IMR-90 (cell line): ENCODE measurements at regions of chr1 and their contacts with region 1.

Region 1: DNA sequence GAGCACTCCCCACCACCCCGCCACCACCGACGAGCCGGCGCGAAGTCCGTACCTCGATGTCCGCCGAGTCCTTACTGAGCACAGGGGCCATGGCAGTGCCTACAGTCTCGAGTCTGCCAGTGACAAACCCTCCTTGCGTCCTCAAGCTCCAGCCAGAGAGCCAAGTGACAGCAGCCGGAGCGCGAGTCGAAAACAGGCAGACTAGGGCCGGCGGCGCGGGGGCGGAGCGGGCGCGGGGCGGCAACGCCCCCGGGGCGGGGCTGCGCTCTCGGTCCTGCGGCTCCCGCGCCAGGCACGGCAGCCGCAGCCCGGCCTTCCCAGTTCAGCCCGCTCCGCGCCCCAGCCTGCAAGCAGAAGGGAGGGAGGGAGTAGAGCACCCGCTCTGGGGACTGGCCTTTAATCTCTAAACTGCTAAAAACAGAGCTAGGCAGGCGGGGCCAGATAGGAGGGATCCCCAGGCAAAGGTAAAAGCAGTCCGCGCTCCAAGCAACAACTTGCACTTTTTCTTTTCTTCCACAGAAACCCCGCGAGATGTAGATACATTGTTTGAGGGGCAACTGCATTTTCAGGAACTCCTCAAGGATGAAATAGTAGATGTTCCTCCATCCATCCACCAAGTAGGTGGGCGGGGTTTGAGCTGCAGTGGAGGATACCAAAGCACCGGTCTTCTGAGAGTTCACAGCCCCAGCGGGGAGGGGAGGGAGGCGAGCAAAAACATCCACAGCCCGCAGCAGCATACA is at the start of gene DPYD:
- DNase-seq: peak; percentile 85
- ATAC-seq: peak; percentile 98
- H3K4me3 ChIP-seq: peak within 1 kb of the TSS; percentile 92
- H3K27ac ChIP-seq: peak within 1 kb of the TSS; percentile 81
- H3K4me1 ChIP-seq: 0 out of 2 replicates have a peak, but pooled peaks cover 2% of the 10 kb centered on the region
- H3K27me3 ChIP-seq: no peaks in the 10 kb centered on the region
- CTCF ChIP-seq: no peak
- POLR2A ChIP-seq: peak; percentile 70; the same call in 1 of the 2 replicates
- RAD21 ChIP-seq: no peak
- total RNA-seq, gene DPYD: 47.3 and 58.3 TPM in 2 replicates

Region 2: DNA sequence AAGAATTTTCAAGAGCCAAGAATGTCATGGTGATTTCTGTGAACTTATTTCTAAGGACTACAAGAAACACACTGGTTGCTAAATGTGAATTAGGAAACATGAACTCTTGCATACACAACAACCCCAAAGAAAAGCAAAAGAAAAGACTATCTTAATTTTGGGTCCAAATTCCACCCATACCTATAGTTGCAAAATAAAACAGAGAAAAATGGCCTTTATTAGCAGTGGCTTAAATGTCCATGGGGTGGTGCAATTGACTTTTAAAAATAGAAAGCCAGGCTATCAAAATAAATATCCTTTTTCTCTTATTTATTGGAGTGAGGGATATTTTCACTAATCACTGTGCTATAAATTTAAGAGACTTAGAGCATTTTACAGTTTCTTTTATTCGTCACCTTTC is 80.8 kb after region 1 on chr1:
- CTCF ChIA-PET with region 1: no interaction called
- POLR2A ChIA-PET with region 1: no interaction called
- dilution Hi-C with region 1: no loop called
- in situ Hi-C with region 1: no loop called
- intact Hi-C with region 1: loop called (anchors 5 kb)
- DNase-seq: peak; percentile 18
- ATAC-seq: peak; percentile 19; the same call in 1 of the 2 replicates
- H3K4me3 ChIP-seq: no peak overlapping the region
- H3K27ac ChIP-seq: no peak overlapping the region
- H3K4me1 ChIP-seq: peaks cover 2% of the 10 kb centered on the region; the same call in 1 of the 2 replicates
- H3K27me3 ChIP-seq: no peaks in the 10 kb centered on the region
- CTCF ChIP-seq: peak; percentile 52
- POLR2A ChIP-seq: no peak
- RAD21 ChIP-seq: peak; percentile 60

Region 3: DNA sequence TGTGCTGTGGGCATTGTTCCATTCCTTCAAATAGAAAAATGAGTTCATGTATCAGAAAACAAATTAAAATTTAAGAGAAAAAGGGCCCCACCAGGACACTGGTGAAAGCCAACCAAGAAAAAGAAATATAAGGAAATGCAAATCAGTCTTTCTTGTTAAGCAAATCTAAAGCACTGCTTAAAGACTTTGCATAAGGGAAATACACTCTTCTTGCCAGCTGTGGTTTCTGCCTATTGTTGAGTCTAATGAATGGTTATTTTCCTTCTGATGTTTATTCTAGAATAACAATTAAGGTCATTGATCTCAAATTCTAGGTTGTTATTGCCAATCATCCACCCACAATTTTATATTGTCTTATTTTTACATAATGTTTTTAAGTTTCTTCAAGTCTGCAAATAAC is 581.9 kb after region 1 on chr1:
- CTCF ChIA-PET with region 1: no interaction called
- POLR2A ChIA-PET with region 1: no interaction called
- dilution Hi-C with region 1: no loop called
- in situ Hi-C with region 1: no loop called
- intact Hi-C with region 1: no loop called
- DNase-seq: no peak
- ATAC-seq: no peak
- H3K4me3 ChIP-seq: no peak overlapping the region
- H3K27ac ChIP-seq: no peak overlapping the region
- H3K4me1 ChIP-seq: no peaks in the 10 kb centered on the region
- H3K27me3 ChIP-seq: no peaks in the 10 kb centered on the region
- CTCF ChIP-seq: no peak
- POLR2A ChIP-seq: no peak
- RAD21 ChIP-seq: no peak

Region 4: DNA sequence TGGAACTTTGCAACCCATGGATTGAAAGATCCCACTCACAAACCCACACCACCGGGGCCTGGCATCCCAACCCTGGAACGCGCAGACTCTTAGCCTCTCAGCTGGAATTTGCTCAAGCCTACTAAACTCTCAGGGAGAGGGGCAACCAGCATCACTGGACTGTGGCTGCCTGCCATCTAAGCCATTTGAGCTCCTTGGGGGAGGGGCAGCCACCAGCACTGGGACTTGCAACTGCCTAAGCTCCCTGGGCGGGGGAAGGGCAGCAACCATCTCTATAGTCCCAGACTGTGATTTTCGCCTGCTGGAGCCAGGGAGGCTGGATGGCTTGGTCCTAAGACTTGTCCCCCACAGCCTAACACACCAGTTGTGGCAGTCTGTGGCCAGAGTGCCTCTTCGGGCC is 862.8 kb after region 1 on chr1:
- CTCF ChIA-PET with region 1: no interaction called
- POLR2A ChIA-PET with region 1: no interaction called
- dilution Hi-C with region 1: no loop called
- in situ Hi-C with region 1: no loop called
- intact Hi-C with region 1: no loop called
- DNase-seq: no peak
- ATAC-seq: no peak
- H3K4me3 ChIP-seq: no peak overlapping the region
- H3K27ac ChIP-seq: no peak overlapping the region
- H3K4me1 ChIP-seq: no peaks in the 10 kb centered on the region
- H3K27me3 ChIP-seq: no peaks in the 10 kb centered on the region
- CTCF ChIP-seq: no peak
- POLR2A ChIP-seq: no peak
- RAD21 ChIP-seq: no peak